Sigmoid colon (tissue), 7 donors: ENCODE measurements at regions of chr9 and their contacts with region 1.

Region 1: DNA sequence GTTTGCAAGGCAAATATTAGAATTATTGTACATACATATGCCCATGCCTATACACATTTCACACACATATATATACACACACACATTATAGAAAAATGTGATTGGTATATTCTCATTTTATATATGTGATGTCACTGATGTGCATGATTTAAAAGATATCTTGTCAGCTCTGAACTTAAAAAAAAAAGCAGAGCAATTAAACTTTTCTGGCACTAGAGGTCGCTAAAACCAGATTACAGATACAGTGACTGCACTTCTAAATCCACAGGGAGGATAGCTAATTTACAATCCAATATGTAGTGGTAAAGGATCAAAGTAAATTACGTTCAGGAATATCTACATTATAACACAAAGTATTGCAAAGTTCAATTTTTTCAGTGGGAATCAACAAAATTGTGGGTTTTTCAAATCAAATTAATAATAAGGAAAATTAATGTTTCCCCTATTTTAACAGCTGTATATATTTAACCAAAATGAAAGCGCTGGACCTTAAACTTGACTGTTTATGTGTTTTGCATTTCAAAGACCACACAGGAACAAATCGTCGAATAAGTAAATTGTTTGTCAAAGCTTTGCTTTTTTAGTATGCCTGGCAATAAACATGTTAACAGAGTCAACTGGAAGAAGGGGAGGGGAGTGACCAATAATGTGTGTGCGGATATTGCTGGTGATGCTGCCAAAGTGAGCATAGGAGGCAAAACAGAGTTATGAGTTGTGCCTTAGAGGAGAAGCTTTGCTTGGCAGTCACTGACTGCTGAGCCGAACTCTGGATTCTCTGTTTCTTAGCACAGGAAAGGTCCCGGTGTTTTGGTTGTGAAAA is 1201.3 kb upstream of the C9orf72 start:
- DNase-seq: no peak
- H3K4me3 ChIP-seq: no peak overlapping the region
- H3K27ac ChIP-seq: no peak overlapping the region
- H3K4me1 ChIP-seq: no peaks in the 10 kb centered on the region
- H3K27me3 ChIP-seq: no peaks in the 10 kb centered on the region
- CTCF ChIP-seq: peak in 2 of 4 experiments; percentile 17 to 44
- EP300 ChIP-seq: no peak
- POLR2A ChIP-seq: no peak

Region 2: DNA sequence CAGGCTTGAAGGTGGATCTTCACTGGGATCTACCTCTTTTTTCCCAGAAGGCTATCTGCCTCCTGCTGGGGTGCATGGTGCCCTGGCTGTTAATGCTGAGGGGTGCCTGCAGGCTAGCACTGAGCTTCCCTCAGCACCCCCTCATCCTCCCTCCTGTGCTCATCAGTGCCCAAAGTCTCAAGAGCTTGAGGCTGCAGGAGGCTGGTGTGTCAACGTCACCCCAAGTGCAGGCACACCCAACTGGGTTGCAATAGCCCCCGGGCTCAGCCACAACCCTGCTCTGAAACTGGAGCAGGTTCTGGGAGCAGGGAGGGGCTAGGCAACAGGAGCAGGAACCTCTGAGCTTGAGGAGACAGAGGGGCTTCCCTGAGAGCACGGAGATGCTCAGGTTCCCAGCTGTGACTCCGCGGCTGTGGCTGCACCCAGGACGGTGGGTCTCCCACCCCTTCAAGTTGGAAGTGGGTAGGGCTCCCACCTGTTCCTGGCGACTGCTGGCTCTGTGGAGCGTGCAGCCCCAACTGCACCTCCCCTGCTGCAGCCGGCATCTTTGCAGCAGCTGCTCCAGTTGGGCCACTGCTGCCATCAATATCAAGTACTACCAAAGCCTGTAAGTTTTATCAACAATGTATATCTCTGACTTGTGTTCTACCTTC is 65.3 kb after region 1 on chr9:
- intact Hi-C with region 1: loop called (anchors 10 kb)
- DNase-seq: no peak
- H3K4me3 ChIP-seq: no peak overlapping the region
- H3K27ac ChIP-seq: no peak overlapping the region
- H3K4me1 ChIP-seq: no peaks in the 10 kb centered on the region
- H3K27me3 ChIP-seq: no peaks in the 10 kb centered on the region
- CTCF ChIP-seq: no peak
- EP300 ChIP-seq: no peak
- POLR2A ChIP-seq: no peak